Activated CD4-positive, alpha-beta memory T cell treated with anti-CD3 and anti-CD28 coated beads for 36 hours (primary cell): ENCODE measurements at regions of chr4 and their contacts with region 1.

Region 1: GRCh38 chr4:88659055-88659889 is 38.4 kb downstream of the NAP1L5 start:
- DNase-seq: peak; percentile 51
- H3K4me3 Mint-ChIP-seq: no peak overlapping the region
- H3K27ac Mint-ChIP-seq: no peak overlapping the region
- H3K4me1 Mint-ChIP-seq: peaks cover 2% of the 10 kb centered on the region
- H3K27me3 Mint-ChIP-seq: no peaks in the 10 kb centered on the region

Region 2: DNA sequence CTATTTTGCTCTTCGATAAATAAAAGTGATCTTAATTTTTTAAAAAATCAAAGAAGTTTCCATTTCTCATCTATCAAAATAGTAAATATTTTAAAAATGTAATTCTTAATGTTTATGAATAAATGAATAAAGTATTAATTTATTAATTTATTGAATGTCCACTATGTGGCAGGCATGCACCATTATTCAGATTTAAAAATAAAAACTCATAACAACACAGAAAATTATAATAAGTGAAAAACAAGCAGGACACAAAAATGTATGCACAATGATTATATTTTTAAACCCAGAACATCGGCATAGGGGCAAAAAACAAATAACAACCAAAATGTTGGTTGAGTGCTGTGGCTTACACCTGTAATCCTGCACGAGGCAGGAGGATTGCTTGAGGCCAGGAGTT is 130.4 kb before region 1 on chr4:
- CTCF ChIA-PET with region 1: interaction called, 17 read pairs
- POLR2A ChIA-PET with region 1: no interaction called
- intact Hi-C with region 1: loop called (anchors 2 kb)
- DNase-seq: no peak
- H3K4me3 Mint-ChIP-seq: no peak overlapping the region
- H3K27ac Mint-ChIP-seq: no peak overlapping the region
- H3K4me1 Mint-ChIP-seq: peaks cover 32% of the 10 kb centered on the region
- H3K27me3 Mint-ChIP-seq: no peaks in the 10 kb centered on the region